Activated CD8-positive, alpha-beta T cell treated with anti-CD3 and anti-CD28 coated beads, Interleukin-2, amount 10 ng/mL, durations not matched to agents 7 days and 5 days (primary cell): ENCODE measurements at regions of chr20 and their contacts with region 1.

Region 1: GRCh38 chr20:53939572-53940359 is 130.6 kb downstream of the BCAS1 start:
- DNase-seq: peak; percentile 89
- ATAC-seq: peak; percentile 82
- H3K4me3 Mint-ChIP-seq: no peak overlapping the region
- H3K27ac Mint-ChIP-seq: no peak overlapping the region
- H3K4me1 Mint-ChIP-seq: peaks cover 62% of the 10 kb centered on the region
- H3K27me3 Mint-ChIP-seq: no peaks in the 10 kb centered on the region

Region 2: DNA sequence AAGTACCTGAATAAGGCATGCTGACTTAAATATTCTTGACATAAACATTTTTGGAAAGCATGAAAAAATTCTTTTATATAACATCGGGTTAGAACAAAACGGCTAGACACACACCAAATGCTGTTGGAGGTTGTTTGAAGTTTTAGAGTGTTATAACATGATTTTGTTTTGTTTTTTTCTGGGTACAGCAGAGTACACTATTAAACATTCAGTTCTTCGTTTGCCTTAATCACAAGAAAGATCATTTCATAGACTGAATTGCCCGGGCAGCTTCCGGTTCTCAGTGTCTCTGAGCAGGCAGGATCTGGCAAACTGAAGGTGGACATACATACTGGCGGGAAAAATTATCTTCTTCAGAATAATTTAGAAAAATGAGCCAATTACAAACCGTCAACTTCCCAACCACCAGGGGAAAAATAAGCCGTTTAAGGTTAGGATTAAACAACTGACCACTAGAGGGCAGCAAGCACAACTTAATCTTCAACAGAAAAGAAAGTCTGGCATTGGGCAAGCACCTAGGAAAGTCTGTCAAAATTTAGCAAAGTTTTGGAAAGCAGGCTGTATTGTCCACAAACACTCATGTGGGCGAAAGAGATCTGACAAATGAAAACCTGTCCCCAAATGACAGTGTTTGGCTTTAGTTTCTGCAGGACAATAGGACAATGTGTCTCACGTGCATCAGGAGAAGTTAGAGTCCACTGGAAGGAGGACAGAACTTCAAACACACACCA is 361.1 kb before region 1 on chr20:
- CTCF ChIA-PET with region 1: interaction called, 48 read pairs
- POLR2A ChIA-PET with region 1: interaction called, 3 read pairs
- DNase-seq: peak; percentile 84
- ATAC-seq: peak; percentile 35
- H3K4me3 Mint-ChIP-seq: peak overlapping the region; percentile 80
- H3K27ac Mint-ChIP-seq: peak overlapping the region; percentile 81
- H3K4me1 Mint-ChIP-seq: peaks cover 87% of the 10 kb centered on the region
- H3K27me3 Mint-ChIP-seq: no peaks in the 10 kb centered on the region

Region 3: GRCh38 chr20:53708129-53708968 is 231.4 kb before region 1 on chr20:
- CTCF ChIA-PET with region 1: interaction called, 11 read pairs
- POLR2A ChIA-PET with region 1: interaction called, 5 read pairs
- DNase-seq: peak; percentile 68
- ATAC-seq: peak; percentile 66
- H3K4me3 Mint-ChIP-seq: peak overlapping the region; percentile 49
- H3K27ac Mint-ChIP-seq: peak overlapping the region; percentile 97
- H3K4me1 Mint-ChIP-seq: peaks cover 73% of the 10 kb centered on the region
- H3K27me3 Mint-ChIP-seq: no peaks in the 10 kb centered on the region

Region 4: GRCh38 chr20:53839423-53840176 is 100.2 kb before region 1 on chr20:
- CTCF ChIA-PET with region 1: interaction called, 10 read pairs
- POLR2A ChIA-PET with region 1: no interaction called
- DNase-seq: peak; percentile 88
- ATAC-seq: peak; percentile 59
- H3K4me3 Mint-ChIP-seq: peak overlapping the region; percentile 71
- H3K27ac Mint-ChIP-seq: peak overlapping the region; percentile 92
- H3K4me1 Mint-ChIP-seq: peaks cover 76% of the 10 kb centered on the region
- H3K27me3 Mint-ChIP-seq: no peaks in the 10 kb centered on the region

Region 5: GRCh38 chr20:53899351-53900167 is 40.2 kb before region 1 on chr20:
- CTCF ChIA-PET with region 1: interaction called, 12 read pairs
- POLR2A ChIA-PET with region 1: interaction called, 3 read pairs
- DNase-seq: peak; percentile 89
- ATAC-seq: peak; percentile 95
- H3K4me3 Mint-ChIP-seq: peak overlapping the region; percentile 35
- H3K27ac Mint-ChIP-seq: peak overlapping the region; percentile 92
- H3K4me1 Mint-ChIP-seq: peaks cover 79% of the 10 kb centered on the region
- H3K27me3 Mint-ChIP-seq: no peaks in the 10 kb centered on the region

Region 6: GRCh38 chr20:54025251-54025771 is 85.5 kb after region 1 on chr20:
- CTCF ChIA-PET with region 1: no interaction called
- POLR2A ChIA-PET with region 1: no interaction called
- DNase-seq: no peak
- ATAC-seq: no peak
- H3K4me3 Mint-ChIP-seq: no peak overlapping the region
- H3K27ac Mint-ChIP-seq: no peak overlapping the region
- H3K4me1 Mint-ChIP-seq: no peaks in the 10 kb centered on the region
- H3K27me3 Mint-ChIP-seq: peaks cover 4% of the 10 kb centered on the region

Region 7: DNA sequence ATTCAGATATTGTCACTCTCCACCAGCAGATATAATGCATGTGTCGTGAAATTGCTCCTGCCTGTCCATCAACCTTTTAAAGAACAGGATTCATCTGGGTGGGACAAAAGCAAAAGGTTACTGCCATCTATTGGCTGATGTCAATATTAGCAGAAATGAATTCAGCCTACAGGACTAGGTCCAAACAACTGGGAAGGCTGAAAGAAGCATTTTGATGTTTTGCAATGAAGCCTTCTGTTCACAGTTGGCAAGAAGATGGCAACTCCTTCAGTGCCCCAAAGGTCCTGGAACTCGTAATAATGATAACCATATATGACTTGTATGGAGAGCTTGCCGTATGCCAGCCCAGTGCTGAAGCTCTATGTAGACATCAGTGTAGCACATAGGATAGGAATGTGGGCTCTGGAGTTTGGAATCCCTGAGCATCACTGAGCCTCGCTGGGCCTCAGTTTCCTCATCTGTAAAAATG is 123.1 kb after region 1 on chr20:
- CTCF ChIA-PET with region 1: interaction called, 14 read pairs
- POLR2A ChIA-PET with region 1: no interaction called
- DNase-seq: no peak
- ATAC-seq: peak; percentile 61
- H3K4me3 Mint-ChIP-seq: no peak overlapping the region
- H3K27ac Mint-ChIP-seq: no peak overlapping the region
- H3K4me1 Mint-ChIP-seq: peaks cover 7% of the 10 kb centered on the region
- H3K27me3 Mint-ChIP-seq: no peaks in the 10 kb centered on the region